Ovary (tissue), 10 donors: ENCODE measurements at regions of chr3 and their contacts with region 1.

Region 1: DNA sequence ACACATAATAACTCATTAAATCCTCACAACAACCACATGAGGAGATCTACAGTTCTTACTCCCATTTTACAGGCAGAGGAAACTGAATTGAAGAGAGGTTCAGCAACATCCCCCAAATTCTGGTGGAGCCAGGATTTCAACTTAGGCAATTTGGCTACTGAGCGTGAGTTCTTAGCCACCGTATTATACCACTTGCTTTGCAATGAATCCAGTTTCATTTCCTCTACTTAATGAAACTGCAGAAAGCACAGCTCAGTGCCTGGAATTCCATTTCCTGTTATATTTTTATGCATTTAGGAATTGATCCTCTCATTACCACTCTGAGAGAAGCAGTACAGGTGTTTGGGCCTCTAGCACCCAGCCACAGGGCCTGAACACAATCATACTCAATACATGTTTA is 4.3 kb downstream of the ZNF860 start:
- DNase-seq: no peak
- H3K4me3 ChIP-seq: no peak overlapping the region
- H3K27ac ChIP-seq: no peak overlapping the region
- H3K4me1 ChIP-seq: no peaks in the 10 kb centered on the region
- H3K27me3 ChIP-seq: no peaks in the 10 kb centered on the region
- CTCF ChIP-seq: no peak
- EP300 ChIP-seq: no peak
- POLR2A ChIP-seq: no peak

Region 2: GRCh38 chr3:31196881-31197364 is 788.9 kb before region 1 on chr3:
- intact Hi-C with region 1: loop called in 1 of 4 experiments (anchors 2 kb)
- DNase-seq: peak in 4 of 5 donors; percentile 34 to 61 (median 48)
- H3K4me3 ChIP-seq: no peak overlapping the region
- H3K27ac ChIP-seq: no peak overlapping the region
- H3K4me1 ChIP-seq: no peaks in the 10 kb centered on the region
- H3K27me3 ChIP-seq: no peaks in the 10 kb centered on the region
- CTCF ChIP-seq: no peak
- EP300 ChIP-seq: no peak
- POLR2A ChIP-seq: no peak